OCI-LY7 (cell line): ENCODE measurements at regions of chr5 and their contacts with region 1.

Region 1: GRCh38 chr5:119136666-119137318 is 65.9 kb downstream of the DMXL1 start:
- DNase-seq: peak; percentile 4
- H3K4me3 ChIP-seq: no peak overlapping the region
- H3K27ac ChIP-seq: no peak overlapping the region
- H3K4me1 ChIP-seq: no peaks in the 10 kb centered on the region
- CTCF ChIP-seq: no peak

Region 2: GRCh38 chr5:118967059-118967508 is 169.7 kb before region 1 on chr5:
- CTCF ChIA-PET with region 1: no interaction called
- POLR2A ChIA-PET with region 1: no interaction called
- intact Hi-C with region 1: no loop called
- DNase-seq: no peak
- H3K4me3 ChIP-seq: no peak overlapping the region
- H3K27ac ChIP-seq: no peak overlapping the region
- H3K4me1 ChIP-seq: no peaks in the 10 kb centered on the region
- CTCF ChIP-seq: no peak

Region 3: DNA sequence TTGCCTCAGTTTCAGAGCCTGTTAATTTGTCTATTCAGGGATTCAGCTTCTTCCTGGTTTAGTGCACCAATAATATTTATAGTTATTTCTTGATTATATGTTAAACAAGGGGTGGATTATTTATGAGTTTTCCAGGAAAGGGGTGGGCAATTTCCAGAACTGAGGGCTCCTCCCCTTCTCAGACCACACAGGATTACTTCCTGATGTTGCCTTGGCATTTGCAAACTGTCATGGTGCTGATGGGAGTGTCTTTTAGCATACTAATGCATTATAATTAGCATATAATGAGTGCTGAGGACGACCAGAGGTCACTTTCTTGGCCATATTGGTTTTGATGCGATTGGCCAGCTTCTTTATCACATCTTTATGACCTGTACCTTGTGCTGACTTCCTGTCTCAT is 142.2 kb before region 1 on chr5:
- CTCF ChIA-PET with region 1: no interaction called
- POLR2A ChIA-PET with region 1: interaction called, 12 read pairs
- intact Hi-C with region 1: no loop called
- DNase-seq: no peak
- H3K4me3 ChIP-seq: no peak overlapping the region
- H3K27ac ChIP-seq: no peak overlapping the region
- H3K4me1 ChIP-seq: peaks cover 9% of the 10 kb centered on the region
- CTCF ChIP-seq: no peak

Region 4: DNA sequence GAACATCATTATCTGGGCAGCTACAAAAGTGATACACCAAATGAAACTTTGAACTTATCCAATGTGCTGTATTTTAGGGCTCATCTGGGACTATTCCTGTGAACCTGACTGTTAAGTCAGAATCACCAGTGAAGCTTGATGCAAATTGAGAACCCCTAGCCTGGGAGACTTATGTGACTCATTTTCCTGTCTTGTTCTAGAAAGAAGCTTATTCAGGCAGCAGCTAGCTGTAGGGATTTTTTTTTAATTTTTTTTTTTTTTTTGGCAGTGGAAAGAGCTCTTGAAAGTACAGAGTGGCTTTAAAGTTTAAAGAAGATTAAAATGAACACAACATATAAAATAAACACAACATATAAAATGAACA is 138.0 kb after region 1 on chr5:
- CTCF ChIA-PET with region 1: no interaction called
- POLR2A ChIA-PET with region 1: no interaction called
- intact Hi-C with region 1: no loop called
- DNase-seq: peak; percentile 58
- H3K4me3 ChIP-seq: peak overlapping the region; percentile 48
- H3K27ac ChIP-seq: peak overlapping the region; percentile 98
- H3K4me1 ChIP-seq: peaks cover 99% of the 10 kb centered on the region
- CTCF ChIP-seq: no peak